Right ventricle myocardium inferior (tissue), 1 donor: ENCODE measurements at regions of chr6 and their contacts with region 1.

Region 1: DNA sequence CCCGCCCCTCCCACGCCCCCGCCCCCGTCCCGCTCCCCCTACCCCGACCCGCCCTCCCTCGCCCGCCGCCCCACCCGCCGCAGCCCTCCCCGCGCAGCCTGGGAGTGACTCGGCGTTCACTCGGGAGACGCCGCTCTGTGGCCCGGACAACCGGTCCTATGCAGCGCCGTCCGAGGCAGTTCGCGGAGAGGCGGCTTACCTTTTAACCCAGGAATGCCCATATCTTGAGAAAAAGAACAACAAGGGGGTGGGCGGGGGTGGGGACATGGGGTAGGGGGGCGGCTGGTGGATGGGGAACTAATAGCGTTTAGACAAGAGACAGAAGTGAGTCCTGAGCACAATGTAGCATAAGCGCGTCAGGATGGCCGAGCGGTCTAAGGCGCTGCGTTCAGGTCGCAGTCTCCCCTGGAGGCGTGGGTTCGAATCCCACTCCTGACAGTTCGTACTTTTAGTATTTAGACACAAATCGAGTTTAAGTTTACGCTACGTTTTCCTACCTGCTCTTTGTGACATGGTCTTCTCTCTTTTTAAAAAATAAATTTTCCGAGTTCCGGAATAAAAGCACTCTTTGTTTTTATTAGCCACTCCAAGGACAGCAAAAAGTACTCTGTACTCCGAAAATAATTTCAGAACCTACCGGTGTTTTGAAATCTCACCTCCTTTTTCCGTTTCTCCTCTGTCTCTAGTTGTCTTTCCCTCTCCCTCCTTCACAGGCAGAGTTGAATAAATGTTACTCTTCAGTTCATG is 17.1 kb upstream of the HMGN4 start:
- DNase-seq: peak; percentile 95
- ATAC-seq: peak; percentile 90

Region 2: GRCh38 chr6:26122793-26123674 is 398.0 kb before region 1 on chr6:
- intact Hi-C with region 1: no loop called
- DNase-seq: peak; percentile 91
- ATAC-seq: peak; percentile 91

Region 3: GRCh38 chr6:26445934-26446667 is 74.9 kb before region 1 on chr6:
- intact Hi-C with region 1: loop called (anchors 2 kb)
- DNase-seq: no peak
- ATAC-seq: no peak

Region 4: GRCh38 chr6:26457806-26458688 is 63.0 kb before region 1 on chr6 and contains the start of gene BTN2A1:
- intact Hi-C with region 1: no loop called
- DNase-seq: peak; percentile 86
- ATAC-seq: peak; percentile 99
- total RNA-seq, gene BTN2A1: 14.5 TPM

Region 5: DNA sequence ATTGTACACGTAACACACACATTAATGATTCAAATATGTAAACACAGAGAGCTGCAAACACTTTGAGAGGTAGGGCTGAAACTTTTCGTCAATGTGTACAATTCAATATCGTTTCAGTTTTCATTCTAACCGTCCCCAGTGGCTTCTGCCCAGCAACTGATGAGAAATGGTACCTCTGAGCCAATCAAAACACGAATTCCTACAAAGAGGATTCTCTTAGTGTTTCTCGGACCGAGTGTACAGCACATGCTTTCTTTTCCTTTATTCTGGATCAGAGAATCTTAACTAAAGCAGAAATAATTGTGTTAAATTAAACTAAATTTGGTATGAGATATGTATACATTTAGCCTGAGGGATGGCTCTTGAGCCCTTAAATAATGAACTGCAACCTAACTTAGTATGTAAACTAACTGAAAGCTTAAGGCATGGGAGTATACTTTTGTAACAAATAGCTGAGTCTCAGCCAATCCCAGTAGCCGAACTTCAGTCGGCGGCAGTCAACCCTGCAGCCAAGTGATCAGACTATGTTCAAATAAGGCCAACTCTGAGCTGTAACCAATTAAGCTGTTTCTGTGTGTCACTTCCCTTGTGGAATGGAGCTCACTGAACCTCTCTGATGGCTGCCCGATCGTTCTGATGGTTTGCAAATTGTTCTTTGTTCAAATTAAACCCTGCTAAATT is 47.1 kb before region 1 on chr6:
- intact Hi-C with region 1: loop called (anchors 2 kb)
- DNase-seq: peak; percentile 84
- ATAC-seq: peak; percentile 95

Region 6: GRCh38 chr6:26532699-26533531 is 11.9 kb after region 1 on chr6:
- intact Hi-C with region 1: loop called (anchors 1 kb)
- DNase-seq: peak; percentile 91
- ATAC-seq: peak; percentile 76

Region 7: DNA sequence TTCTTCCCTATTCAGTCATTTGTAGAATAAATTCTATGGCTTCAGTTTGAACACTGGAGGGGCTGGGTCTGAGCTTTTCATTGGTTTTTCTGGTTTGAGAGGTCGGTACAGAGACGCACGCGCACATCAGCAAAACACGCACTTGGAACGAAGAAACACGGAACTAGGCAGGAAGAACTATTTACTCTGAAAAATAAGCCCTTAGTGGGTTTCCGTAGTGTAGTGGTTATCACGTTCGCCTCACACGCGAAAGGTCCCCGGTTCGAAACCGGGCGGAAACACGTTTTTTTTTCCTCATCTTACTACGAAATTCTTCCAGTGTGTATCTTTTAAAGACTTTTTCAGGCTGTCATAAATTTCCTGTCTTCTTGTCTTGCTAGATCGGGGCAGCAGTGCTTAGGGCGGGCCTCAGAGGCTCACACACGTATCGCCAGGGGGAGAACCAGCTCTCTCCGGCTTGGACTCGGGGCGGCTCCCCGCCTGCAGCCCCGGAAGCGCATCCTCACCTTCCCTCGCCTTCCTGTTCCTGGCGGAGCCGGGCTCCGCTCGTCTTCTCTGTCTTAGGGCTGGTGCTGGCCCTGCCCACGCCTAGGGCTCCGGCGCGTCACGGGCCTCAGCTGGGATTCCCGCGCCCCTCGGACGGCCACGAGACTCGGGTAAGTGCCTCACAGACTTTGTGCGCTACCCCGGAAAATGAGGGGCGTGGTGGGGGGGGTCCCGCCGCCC is 17.0 kb after region 1 on chr6 and contains the start of gene HMGN4:
- intact Hi-C with region 1: loop called (anchors 2 kb)
- DNase-seq: peak; percentile 90
- ATAC-seq: peak; percentile 89
- total RNA-seq, gene HMGN4: 29.0 TPM

Region 8: DNA sequence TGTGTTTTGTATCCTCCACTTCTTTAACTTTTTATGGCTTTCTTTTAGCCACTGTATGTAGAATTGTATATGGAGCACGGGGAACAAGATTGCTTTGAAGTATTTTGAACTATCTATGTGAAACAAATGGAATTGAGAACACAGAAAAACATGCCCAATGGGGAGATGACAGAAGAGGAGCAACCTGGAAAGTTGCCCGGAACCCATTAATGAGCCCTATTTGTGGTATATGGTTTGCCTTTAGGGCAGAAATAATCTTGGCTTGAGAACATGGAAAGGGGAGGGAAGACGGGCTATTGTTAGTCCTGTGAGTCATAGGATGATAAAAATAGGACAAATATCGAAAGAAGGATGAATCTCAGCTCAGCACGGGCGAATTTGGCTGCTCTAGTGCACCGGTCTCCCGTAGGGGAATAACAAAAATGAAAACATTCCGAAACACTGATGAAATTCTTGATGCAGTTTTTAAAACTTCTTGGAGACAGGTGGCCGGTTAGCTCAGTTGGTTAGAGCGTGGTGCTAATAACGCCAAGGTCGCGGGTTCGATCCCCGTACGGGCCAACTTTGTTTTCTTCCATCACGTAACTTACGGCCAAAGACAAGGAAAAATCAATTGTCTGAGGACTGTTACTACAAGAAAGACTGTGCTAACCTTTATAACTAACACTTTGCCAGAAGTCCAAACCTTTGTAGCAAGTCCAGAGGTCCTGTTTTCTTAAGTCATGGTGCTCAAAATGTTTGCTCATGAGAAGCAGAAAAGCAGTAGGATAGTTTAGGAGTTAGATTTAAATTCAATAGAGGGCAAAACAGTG is 32.8 kb after region 1 on chr6:
- intact Hi-C with region 1: loop called (anchors 1 kb)
- DNase-seq: peak; percentile 80
- ATAC-seq: peak; percentile 83